Tibial artery (tissue), 4 donors: ENCODE measurements at regions of chr2 and their contacts with region 1.

Region 1: DNA sequence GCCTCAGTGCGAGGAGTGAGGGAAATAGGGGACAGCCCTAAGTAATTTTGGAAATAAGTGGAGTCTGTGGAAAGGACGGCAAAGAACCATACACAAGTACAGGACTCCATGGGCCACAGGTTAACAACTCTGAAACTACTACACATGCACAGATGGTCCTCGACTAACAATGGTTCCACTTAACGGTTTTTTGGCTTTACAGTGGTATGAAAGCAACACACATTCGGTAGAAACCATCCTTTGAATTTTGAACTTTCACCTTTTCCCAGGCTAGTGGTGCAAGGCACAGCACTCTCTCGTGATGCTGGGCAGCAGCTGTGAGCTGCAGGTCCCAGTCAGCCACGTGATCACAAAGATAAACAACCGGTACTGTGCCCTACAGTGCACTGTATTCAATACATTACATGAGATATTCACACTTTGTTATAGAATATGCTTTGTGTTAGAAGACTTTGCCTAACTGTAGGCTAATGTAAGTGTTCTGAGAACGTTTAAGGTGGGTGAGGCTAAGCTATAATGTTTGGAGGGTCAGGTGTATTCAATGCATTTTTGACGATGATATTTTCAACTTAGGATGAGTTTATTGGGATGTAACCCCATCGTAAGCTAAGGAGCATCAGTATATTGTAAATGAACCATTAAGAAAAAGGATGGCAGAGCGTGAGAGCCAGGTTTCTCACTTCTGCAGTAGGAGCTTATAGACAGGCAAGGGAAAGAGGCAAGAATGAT is 44.6 kb downstream of the TBC1D8 start:
- DNase-seq: no peak
- H3K4me3 ChIP-seq: no peak overlapping the region
- H3K27ac ChIP-seq: no peak overlapping the region
- H3K4me1 ChIP-seq: peaks cover 0 to 36% (median 21%) of the 10 kb centered on the region in 4 donors
- H3K27me3 ChIP-seq: no peaks in the 10 kb centered on the region
- CTCF ChIP-seq: no peak

Region 2: GRCh38 chr2:100793982-100794381 is 312.6 kb before region 1 on chr2:
- intact Hi-C with region 1: no loop called
- DNase-seq: no peak
- H3K4me3 ChIP-seq: no peak overlapping the region
- H3K27ac ChIP-seq: no peak overlapping the region
- H3K4me1 ChIP-seq: no peaks in the 10 kb centered on the region
- H3K27me3 ChIP-seq: peaks cover 0 to 3% of the 10 kb centered on the region in 2 donors
- CTCF ChIP-seq: no peak

Region 3: DNA sequence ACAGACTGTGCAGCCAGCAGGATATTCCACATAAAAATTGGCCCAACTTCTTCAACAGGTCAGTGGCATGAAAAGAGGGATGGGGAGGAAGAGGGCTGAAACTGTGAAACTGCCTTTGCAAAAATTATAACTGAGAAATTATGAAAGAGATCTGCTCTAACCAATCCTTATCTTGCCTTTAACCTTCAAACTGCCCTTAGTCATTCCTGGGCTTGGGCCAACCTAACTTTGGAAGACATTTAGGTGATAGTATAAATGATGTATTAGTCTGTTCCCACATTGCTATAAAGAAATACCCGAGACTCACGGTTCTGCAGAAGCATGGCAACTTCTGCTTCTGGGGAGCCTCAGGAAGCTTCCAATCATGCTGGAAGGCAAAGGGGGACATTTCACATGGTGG is 30.0 kb before region 1 on chr2:
- intact Hi-C with region 1: loop called (anchors 2 kb)
- DNase-seq: no peak
- H3K4me3 ChIP-seq: no peak overlapping the region
- H3K27ac ChIP-seq: no peak overlapping the region
- H3K4me1 ChIP-seq: peaks cover 0 to 5% (median 0%) of the 10 kb centered on the region in 4 donors
- H3K27me3 ChIP-seq: no peaks in the 10 kb centered on the region
- CTCF ChIP-seq: no peak